Transverse colon (tissue), 4 donors: ENCODE measurements at regions of chr16 and their contacts with region 1.

Region 1: GRCh38 chr16:55672471-55672870 is 16.7 kb downstream of the SLC6A2 start:
- DNase-seq: no peak
- H3K4me3 ChIP-seq: no peak overlapping the region
- H3K27ac ChIP-seq: no peak overlapping the region
- H3K4me1 ChIP-seq: no peaks in the 10 kb centered on the region
- H3K27me3 ChIP-seq: no peaks in the 10 kb centered on the region
- CTCF ChIP-seq: no peak
- EP300 ChIP-seq: no peak
- POLR2A ChIP-seq: no peak

Region 2: GRCh38 chr16:55655860-55656695 is 16.4 kb before region 1 on chr16 and contains the start of gene SLC6A2:
- in situ Hi-C with region 1: no loop called
- intact Hi-C with region 1: loop called (anchors 1 kb)
- DNase-seq: no peak
- H3K4me3 ChIP-seq: peak within 1 kb of the TSS in 1 of 4 donors; percentile 31
- H3K27ac ChIP-seq: no peak within 1 kb of the TSS
- H3K4me1 ChIP-seq: peaks cover 0 to 8% (median 2%) of the 10 kb centered on the region in 4 donors
- H3K27me3 ChIP-seq: peaks cover 54% of the 10 kb centered on the region
- CTCF ChIP-seq: no peak
- EP300 ChIP-seq: no peak
- POLR2A ChIP-seq: no peak
- total RNA-seq, gene SLC6A2: 0.32 TPM in 1 of 4 donors, not detected in the others